ENCODE measurements at regions of chr11 and their contacts with region 1.

Region 1: DNA sequence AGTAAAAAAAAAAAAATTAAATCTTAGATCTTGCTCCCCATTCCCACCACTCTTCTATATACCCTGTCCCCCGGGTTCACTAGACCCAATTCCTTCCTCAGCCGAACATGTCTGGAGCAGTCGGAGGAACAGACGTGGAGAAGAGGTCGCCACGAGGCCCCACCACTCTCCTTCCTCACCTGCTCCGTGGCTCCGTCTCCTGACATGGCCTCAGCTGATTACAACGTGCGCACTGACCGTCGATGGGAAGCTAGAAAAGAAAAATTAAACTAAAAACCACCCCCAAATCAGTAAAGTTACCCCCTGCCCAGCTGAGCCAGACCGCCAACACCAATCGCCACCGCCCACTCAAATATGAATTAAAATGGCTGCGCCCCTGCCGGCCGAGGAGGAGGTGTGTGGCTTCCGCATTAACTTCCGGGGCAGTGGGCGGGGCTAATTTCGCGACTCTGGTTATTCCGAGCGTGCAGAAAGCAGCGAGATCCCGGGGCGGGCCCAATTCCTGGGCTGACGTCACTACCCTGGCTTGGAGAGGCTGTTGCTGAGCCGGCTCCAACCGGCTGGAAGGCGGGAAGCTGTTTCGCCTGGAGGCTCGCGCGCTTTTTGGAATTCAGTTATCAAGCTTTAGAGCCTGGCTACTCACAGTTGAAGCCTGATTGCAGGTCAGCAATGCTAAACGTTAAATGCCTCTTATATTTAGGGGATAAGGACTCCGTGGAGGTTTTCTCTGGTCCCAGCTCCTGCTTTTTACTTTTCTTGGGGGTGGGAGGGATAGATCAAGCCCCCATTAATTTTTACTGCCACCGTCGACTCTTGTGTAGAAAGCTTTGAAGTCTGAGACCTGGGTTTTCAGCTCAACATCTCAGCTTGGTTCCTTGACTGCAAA is at the start of gene CSTF3:
- DNase-seq: peak; percentile 100

Region 2: GRCh38 chr11:32615422-32615821 is 545.9 kb before region 1 on chr11:
- intact Hi-C with region 1: no loop called
- DNase-seq: no peak

Region 3: DNA sequence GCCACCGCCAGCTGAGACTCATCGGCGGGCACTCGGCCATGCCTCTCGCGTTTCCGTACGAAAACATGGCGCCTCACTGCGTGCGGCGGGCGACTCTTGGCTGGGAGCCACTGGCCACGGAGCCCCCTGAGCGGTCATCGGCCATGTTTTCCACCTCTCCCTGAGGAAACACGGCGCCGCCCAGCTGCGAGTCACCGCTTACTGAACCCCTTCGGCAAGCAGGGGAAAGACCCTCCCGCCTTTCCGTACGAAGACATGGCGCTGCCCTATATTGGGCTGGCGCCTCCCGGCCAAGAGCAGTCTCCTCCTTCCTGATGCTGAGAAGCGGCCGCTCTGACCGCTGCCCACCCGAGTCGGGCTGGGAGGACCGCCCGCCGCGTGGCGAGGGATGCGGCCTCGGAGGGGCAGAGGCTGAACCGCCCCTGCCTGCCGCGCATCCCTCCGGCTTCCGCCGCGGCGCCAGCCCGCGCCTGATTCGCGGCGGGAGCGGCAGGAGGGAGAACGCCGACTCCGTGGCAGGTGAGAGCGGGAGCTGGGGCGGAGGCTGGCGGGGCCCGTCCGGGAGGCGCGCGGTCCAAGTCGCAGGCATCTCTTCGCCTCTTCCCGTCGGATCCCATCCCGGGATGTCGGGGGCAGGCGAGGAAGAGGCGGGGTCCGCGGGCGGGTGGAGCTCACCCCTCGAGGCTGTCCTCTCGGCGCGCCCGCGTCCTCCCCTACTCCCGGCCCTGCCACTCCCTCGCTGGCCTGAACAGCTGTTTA is 121.9 kb before region 1 on chr11 and contains the start of gene TCP11L1:
- intact Hi-C with region 1: loop called (anchors 10 kb)
- DNase-seq: peak; percentile 70 to 97 (median 94)

Region 4: DNA sequence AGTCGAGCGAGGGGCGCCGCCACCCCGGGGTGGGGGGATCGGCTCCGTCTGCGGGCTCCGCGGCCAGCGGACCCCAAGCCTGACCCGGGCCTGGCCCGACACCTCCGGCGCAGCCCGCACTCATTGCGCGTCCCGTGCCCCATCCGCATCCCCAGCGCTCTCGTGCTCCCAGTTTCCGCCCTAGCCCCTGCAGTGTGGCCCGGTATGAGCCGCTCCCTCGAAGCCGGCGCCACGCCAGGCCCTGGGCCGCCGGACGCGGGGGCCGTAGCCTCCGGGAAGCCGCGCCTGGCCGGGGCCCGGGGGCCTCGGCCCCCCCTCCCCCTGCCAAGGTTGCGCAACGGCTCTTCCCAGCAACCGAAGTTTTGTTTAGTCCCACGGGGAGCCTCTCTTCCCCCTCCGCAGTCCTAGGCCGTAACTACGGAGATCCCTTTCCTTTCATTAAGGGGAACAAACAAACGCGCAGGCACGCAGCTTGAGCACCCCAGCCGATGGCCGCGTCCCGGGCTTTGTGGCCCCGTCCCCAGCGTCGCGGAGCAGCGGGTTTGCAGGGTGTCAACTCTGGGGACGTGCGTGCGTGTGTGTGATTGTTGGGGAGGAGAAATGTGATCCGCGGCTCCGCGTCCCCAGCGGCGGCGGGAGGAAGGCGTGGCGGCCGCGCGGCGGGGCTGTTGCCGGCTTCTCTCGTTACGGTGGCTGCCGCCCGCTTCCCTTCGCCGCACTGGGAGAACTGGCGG is 96.7 kb after region 1 on chr11:
- intact Hi-C with region 1: loop called (anchors 5 kb)
- DNase-seq: peak; percentile 43 to 89 (median 78)

Region 5: DNA sequence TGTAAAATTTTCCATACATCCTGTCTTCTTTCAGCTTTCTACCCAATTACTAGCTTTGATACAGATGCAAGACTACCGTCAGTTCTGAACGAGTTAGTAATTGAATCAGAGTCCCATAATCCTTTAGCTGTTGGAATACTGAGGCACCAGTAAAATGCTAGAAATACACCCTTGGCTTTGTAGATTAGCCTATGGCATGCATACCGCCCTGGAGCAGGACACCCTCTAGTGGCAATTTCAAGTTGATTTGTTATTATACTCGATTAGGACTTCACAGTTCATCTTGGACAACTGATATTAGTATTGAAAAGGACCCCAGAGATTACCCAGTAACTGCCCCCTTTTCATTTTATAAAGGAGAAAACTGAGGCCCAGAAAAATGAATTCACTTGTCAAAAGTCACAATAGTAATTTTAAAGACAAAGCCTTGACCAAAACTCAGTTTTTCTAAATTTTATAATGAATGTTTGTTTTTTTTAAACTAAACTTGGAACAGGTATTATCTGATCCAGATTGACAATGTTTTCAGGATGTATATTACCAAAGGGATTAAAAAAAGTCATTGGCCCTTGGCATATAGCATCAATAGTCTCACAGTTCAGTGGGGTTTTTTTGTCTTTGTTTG is 168.5 kb after region 1 on chr11:
- intact Hi-C with region 1: loop called (anchors 2 kb)
- DNase-seq: peak in 37 of 42 donors; percentile 22 to 82 (median 48)

Region 6: DNA sequence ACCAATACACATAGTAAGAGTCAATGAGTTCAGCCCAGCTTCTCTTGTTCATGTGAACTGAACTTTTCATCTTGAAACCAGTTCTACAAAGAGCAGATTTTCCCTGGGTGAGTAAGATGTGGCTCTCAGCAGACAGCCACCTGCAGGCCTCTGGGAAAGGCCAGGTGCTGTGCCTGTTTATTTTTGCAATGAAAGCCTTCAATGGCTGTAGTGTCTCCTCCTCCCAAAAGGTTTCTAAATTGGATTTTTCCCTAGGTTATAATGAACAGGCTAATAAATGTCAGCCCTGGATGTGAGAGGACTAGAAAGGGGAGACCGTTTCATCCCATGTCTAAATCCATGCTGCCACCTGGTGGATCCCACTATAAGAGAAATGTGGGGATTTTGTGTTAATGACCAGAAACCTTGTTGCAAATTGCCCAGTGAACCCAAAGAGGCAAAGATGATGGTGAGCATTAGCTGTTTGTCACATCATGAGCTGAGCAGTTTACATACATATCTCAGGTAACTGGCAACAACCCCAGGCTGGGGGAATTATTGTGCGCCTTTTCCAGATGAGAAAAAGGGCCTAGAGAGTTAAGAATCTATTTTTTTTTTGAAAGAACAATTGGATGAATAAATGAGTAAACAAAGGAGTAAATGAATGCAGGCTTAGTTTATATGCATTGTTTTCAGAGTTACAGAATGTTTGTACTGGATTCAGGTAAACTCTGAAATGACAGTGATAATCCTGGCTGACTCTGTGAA is 526.5 kb after region 1 on chr11:
- intact Hi-C with region 1: loop called (anchors 5 kb)
- DNase-seq: peak in 37 of 42 donors; percentile 32 to 91 (median 71)

Measured in head of caudate nucleus (tissue), 42 donors.